IMR-90 (cell line): ENCODE measurements at regions of chr4 and their contacts with region 1.

Region 1: DNA sequence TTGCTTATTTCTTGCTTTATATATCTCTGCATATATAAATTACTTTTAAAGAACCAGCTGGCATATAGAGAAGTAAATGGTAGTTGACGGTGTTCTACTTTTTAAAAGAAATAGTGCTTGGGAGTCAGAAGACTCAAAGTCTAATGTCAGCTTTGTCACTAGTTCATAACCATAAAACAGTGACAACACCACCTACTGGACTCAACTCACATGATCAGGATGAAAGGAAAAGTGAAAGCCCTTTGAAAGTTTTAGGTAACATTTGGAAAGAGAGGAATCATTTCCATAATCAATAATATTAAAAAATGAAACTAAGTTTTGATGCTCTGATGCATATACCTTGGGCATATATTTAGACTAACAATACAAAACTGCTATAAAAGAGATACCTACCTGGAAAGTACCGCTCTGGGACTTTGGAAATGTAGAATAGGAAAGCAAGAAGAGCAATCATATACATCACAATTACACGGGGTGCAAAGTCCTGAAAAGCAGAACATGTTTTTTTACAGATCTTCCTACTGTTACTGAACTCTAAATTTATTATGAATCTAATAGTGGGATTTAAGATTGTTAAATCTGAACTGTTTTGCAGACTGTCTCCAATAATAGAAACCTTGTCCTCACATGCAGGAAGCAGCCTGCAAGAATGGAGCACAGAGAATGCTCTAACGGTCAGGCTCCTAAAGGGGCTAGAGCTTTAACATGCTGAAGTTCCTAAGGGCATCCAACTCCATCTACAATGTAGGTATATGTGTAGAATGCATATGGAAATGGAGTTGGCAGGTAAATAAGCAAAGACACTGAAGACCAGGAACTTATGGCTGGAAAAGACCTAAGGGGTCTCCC is 15.6 kb downstream of the PAQR3 start:
- DNase-seq: no peak
- ATAC-seq: no peak
- H3K4me3 ChIP-seq: no peak overlapping the region
- H3K27ac ChIP-seq: no peak overlapping the region
- H3K4me1 ChIP-seq: peaks cover 2% of the 10 kb centered on the region; the same call in 1 of the 2 replicates
- H3K27me3 ChIP-seq: no peaks in the 10 kb centered on the region
- CTCF ChIP-seq: no peak; the same call in 1 of the 2 replicates
- POLR2A ChIP-seq: no peak
- RAD21 ChIP-seq: no peak

Region 2: DNA sequence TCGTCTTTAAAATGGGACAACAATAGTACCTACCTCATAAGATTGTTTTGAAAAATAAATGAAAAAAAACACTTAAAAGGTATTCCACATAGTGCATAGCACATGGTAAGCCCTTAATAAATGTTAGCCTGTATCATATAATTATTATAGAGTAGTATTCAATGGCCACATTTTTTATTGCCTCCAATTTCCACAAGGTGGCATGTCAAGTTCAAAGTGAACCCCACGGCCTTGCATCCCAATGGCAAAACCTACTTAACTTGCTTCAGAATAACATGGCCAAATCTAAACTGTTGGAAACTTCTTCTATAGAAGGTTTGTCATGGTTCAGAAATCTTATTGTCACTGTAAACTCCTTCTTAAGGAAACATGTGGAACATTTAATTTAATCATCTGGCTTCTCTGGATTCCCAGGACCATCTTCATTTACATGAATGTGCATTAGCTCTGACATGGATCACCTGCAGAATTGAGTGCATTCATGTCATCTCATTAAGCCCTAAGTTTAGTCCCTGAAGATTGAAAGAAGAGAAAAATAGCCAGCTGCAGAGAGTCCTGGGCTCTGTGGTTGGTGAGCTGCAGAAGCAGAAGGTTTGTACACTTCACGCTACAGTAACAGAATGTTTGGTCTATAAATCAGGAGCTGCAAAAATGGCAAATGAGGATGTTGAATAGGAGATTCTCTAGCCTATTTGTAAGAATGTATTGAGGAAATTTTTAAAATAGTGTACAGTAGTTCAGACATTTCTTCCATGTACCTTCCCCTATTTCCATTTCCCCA is 311.1 kb before region 1 on chr4:
- CTCF ChIA-PET with region 1: no interaction called
- POLR2A ChIA-PET with region 1: no interaction called
- dilution Hi-C with region 1: no loop called
- in situ Hi-C with region 1: no loop called
- intact Hi-C with region 1: loop called (anchors 10 kb)
- DNase-seq: peak; percentile 61
- ATAC-seq: peak; percentile 73
- H3K4me3 ChIP-seq: no peak overlapping the region
- H3K27ac ChIP-seq: no peak overlapping the region
- H3K4me1 ChIP-seq: no peaks in the 10 kb centered on the region; the same call in 1 of the 2 replicates
- H3K27me3 ChIP-seq: no peaks in the 10 kb centered on the region
- CTCF ChIP-seq: peak; percentile 65
- POLR2A ChIP-seq: no peak
- RAD21 ChIP-seq: peak; percentile 76

Region 3: GRCh38 chr4:78845472-78845871 is 78.2 kb before region 1 on chr4:
- CTCF ChIA-PET with region 1: no interaction called
- POLR2A ChIA-PET with region 1: no interaction called
- dilution Hi-C with region 1: no loop called
- in situ Hi-C with region 1: no loop called
- intact Hi-C with region 1: loop called (anchors 2 kb)
- DNase-seq: no peak
- ATAC-seq: no peak
- H3K4me3 ChIP-seq: no peak overlapping the region
- H3K27ac ChIP-seq: no peak overlapping the region
- H3K4me1 ChIP-seq: no peaks in the 10 kb centered on the region
- H3K27me3 ChIP-seq: no peaks in the 10 kb centered on the region
- CTCF ChIP-seq: no peak
- POLR2A ChIP-seq: no peak
- RAD21 ChIP-seq: no peak